HepG2 (cell line): ENCODE measurements at regions of chr10 and their contacts with region 1.

Region 1: GRCh38 chr10:58892031-58892531 is 284.4 kb upstream of the PHYHIPL start:
- DNase-seq: no peak
- ATAC-seq: no peak
- H3K4me3 ChIP-seq: no peak overlapping the region
- H3K27ac ChIP-seq: no peak overlapping the region
- H3K4me1 ChIP-seq: peaks cover 25% of the 10 kb centered on the region
- H3K27me3 ChIP-seq: no peaks in the 10 kb centered on the region; a peak in 1 of 5 replicates
- CTCF ChIP-seq: no peak
- EP300 ChIP-seq: no peak
- POLR2A ChIP-seq: no peak
- RAD21 ChIP-seq: no peak

Region 2: GRCh38 chr10:58555170-58555929 is 336.7 kb before region 1 on chr10:
- CTCF ChIA-PET with region 1: no interaction called
- POLR2A ChIA-PET with region 1: no interaction called
- in situ Hi-C with region 1: no loop called
- intact Hi-C with region 1: no loop called
- DNase-seq: peak; percentile 81
- ATAC-seq: no peak
- H3K4me3 ChIP-seq: peak overlapping the region in 2 of 3 experiments; percentile 10 to 19; a peak in 2 of 6 replicates
- H3K27ac ChIP-seq: no peak overlapping the region
- H3K4me1 ChIP-seq: peaks cover 45% of the 10 kb centered on the region
- H3K27me3 ChIP-seq: no peaks in the 10 kb centered on the region
- CTCF ChIP-seq: no peak
- EP300 ChIP-seq: no peak
- POLR2A ChIP-seq: no peak
- RAD21 ChIP-seq: no peak

Region 3: DNA sequence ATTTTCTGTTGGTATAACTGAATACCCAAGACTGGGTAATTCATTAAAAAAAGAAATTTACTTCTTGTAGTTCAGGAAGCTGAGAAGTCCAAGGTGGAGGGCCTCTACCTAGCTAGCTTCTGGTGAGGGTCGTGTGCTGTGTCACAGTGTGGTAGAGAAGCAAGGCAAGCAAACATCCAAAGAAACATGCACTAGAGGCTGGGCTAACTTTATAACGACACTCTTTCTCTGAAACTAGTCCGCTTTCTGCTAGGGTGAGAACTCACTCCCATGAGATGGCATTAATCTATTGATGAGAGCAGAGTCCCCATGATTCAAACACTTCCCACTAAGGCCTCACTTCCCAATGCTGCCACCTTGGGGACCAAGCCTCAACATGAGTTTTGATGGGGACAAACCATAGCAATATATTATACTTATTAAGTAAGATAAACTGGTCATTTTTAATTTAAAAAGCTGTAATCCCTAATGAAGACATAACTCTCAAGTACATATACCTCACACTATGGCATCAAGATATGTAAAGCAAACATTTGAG is 335.1 kb after region 1 on chr10:
- CTCF ChIA-PET with region 1: no interaction called
- POLR2A ChIA-PET with region 1: no interaction called
- in situ Hi-C with region 1: no loop called
- intact Hi-C with region 1: loop called (anchors 10 kb)
- DNase-seq: no peak
- ATAC-seq: peak; percentile 54
- H3K4me3 ChIP-seq: no peak overlapping the region
- H3K27ac ChIP-seq: no peak overlapping the region
- H3K4me1 ChIP-seq: peaks cover 33% of the 10 kb centered on the region
- H3K27me3 ChIP-seq: no peaks in the 10 kb centered on the region
- CTCF ChIP-seq: 0 out of 2 replicates have a peak, but pooled peaks have one; percentile 20
- EP300 ChIP-seq: no peak
- POLR2A ChIP-seq: no peak
- RAD21 ChIP-seq: no peak

Region 4: GRCh38 chr10:59315465-59315864 is 423.4 kb after region 1 on chr10:
- CTCF ChIA-PET with region 1: no interaction called
- POLR2A ChIA-PET with region 1: no interaction called
- in situ Hi-C with region 1: no loop called
- intact Hi-C with region 1: no loop called
- DNase-seq: peak; percentile 12
- ATAC-seq: no peak
- H3K4me3 ChIP-seq: no peak overlapping the region
- H3K27ac ChIP-seq: no peak overlapping the region
- H3K4me1 ChIP-seq: peaks cover 12% of the 10 kb centered on the region
- H3K27me3 ChIP-seq: no peaks in the 10 kb centered on the region
- CTCF ChIP-seq: no peak
- EP300 ChIP-seq: no peak
- POLR2A ChIP-seq: no peak
- RAD21 ChIP-seq: no peak

Region 5: DNA sequence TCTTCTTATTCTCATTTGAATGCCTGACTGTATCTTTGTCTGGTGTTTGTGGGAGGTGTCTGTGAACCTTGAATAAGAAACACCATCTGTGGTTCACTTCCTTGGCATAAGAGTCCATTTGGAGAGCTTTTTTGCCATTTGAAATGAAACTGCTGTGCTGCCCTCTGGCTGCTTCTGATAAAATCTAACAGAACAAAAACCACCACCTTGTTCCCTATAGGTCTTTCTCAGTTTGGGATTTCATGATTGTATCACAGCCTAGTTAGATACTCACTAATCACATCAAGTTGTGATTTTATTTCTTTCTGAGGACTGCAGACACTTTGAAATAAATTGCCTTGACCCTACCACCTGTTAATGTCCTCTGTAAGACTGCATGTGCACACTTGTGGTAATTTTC is 573.0 kb after region 1 on chr10:
- CTCF ChIA-PET with region 1: no interaction called
- POLR2A ChIA-PET with region 1: no interaction called
- in situ Hi-C with region 1: no loop called
- intact Hi-C with region 1: loop called (anchors 1 kb)
- DNase-seq: peak; percentile 4
- ATAC-seq: no peak
- H3K4me3 ChIP-seq: no peak overlapping the region
- H3K27ac ChIP-seq: no peak overlapping the region
- H3K4me1 ChIP-seq: no peaks in the 10 kb centered on the region
- H3K27me3 ChIP-seq: no peaks in the 10 kb centered on the region; a peak in 1 of 5 replicates
- CTCF ChIP-seq: peak; percentile 56
- EP300 ChIP-seq: no peak
- POLR2A ChIP-seq: no peak
- RAD21 ChIP-seq: no peak